ENCODE measurements at regions of chrX and their contacts with region 1.

Region 1: DNA sequence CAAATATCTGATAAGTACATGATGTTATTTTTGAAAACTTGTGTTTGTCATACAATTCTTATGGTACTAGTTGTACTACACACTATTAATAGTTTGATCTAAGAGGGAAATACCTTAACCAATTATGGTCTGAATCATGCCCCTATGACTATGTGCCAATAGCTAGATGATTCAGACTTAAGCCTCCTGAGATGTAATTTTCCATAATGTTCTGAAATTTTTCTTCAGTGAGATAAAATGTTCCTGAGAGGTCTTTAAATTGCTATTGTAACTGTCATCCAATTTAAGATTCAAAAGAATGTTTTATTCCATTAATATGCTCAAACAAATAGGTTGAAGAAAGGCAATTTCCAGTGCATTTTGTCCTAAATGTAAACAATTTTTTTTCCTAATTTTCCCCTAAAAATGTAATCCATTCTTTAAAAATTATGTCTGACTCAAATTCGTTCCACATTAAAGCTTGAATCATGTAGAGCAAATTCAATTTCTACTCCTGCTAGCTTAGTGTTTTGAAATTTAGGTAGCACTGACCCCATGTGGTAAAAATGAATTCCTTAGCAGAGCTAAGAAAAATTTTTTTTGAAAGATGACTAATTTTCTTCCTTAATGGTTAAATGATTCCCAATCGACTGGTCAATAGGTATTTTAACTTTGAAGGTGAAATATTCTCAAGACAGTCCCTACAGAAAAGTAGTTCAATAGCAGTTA is 49.1 kb downstream of the APOOL start:
- DNase-seq: no peak
- H3K4me3 Mint-ChIP-seq: no peak overlapping the region
- H3K27ac Mint-ChIP-seq: no peak overlapping the region
- H3K4me1 Mint-ChIP-seq: no peaks in the 10 kb centered on the region
- H3K27me3 Mint-ChIP-seq: no peaks in the 10 kb centered on the region

Region 2: DNA sequence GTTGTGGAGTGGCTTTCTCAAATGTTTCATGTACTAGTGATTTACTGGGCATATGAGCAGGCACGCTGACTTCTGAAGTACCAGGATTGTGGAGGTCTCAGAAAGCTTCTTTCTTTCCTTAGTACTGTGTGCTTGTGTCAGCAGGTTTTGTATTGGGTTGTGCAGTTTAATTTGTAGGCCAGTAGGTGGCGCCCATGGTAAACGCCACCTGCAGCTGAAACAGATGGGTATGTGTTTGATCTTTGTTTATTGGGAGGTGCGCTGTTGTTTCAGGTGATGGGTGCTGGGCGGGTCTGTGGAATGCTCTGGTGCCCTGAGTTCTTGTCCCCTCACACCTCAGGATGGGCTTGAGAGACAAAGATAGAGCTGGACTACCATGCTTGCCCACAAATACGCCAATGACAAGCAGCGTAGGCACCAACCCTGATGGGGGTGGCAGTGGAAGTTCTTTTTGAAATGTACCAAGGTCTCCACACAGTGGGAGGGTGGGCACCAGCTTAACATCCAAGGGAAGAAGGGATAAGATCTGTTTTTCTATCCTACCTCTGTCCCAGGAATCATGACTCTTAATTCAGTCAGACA is 1006.3 kb before region 1 on chrX:
- CTCF ChIA-PET with region 1: no interaction called
- POLR2A ChIA-PET with region 1: no interaction called
- intact Hi-C with region 1: loop called (anchors 5 kb)
- DNase-seq: no peak
- H3K4me3 Mint-ChIP-seq: no peak overlapping the region
- H3K27ac Mint-ChIP-seq: no peak overlapping the region
- H3K4me1 Mint-ChIP-seq: no peaks in the 10 kb centered on the region
- H3K27me3 Mint-ChIP-seq: no peaks in the 10 kb centered on the region

Region 3: DNA sequence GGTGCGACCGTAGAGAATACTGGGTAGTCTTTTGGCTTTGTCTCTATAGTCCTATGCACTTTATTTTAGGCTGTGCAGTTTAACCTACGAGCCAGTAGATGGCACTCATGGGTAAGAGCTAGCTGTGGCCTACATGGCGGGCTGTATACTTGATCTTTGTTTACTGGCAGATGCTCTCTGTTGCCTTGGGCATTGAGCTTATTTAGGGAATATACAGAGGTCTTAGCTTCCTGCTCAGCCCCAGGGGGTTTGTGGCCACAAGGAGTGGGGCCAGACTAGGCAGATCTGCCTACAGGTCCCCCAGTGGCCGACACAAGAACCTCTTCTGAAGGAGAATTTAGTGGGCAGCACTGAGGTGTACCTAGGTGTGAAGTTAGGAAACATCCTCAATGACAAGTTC is 323.0 kb before region 1 on chrX:
- CTCF ChIA-PET with region 1: no interaction called
- POLR2A ChIA-PET with region 1: no interaction called
- intact Hi-C with region 1: loop called (anchors 2 kb)
- DNase-seq: no peak
- H3K4me3 Mint-ChIP-seq: no peak overlapping the region
- H3K27ac Mint-ChIP-seq: no peak overlapping the region
- H3K4me1 Mint-ChIP-seq: no peaks in the 10 kb centered on the region
- H3K27me3 Mint-ChIP-seq: no peaks in the 10 kb centered on the region

Region 4: GRCh38 chrX:85221361-85221760 is 168.6 kb after region 1 on chrX:
- CTCF ChIA-PET with region 1: no interaction called
- POLR2A ChIA-PET with region 1: no interaction called
- intact Hi-C with region 1: no loop called
- DNase-seq: no peak
- H3K4me3 Mint-ChIP-seq: no peak overlapping the region
- H3K27ac Mint-ChIP-seq: no peak overlapping the region
- H3K4me1 Mint-ChIP-seq: peaks cover 7% of the 10 kb centered on the region
- H3K27me3 Mint-ChIP-seq: no peaks in the 10 kb centered on the region

Measured in activated CD4-positive, alpha-beta memory T cell treated with anti-CD3 and anti-CD28 coated beads for 36 hours (primary cell).